Panc1 (cell line): ENCODE measurements at regions of chr2 and their contacts with region 1.

Region 1: DNA sequence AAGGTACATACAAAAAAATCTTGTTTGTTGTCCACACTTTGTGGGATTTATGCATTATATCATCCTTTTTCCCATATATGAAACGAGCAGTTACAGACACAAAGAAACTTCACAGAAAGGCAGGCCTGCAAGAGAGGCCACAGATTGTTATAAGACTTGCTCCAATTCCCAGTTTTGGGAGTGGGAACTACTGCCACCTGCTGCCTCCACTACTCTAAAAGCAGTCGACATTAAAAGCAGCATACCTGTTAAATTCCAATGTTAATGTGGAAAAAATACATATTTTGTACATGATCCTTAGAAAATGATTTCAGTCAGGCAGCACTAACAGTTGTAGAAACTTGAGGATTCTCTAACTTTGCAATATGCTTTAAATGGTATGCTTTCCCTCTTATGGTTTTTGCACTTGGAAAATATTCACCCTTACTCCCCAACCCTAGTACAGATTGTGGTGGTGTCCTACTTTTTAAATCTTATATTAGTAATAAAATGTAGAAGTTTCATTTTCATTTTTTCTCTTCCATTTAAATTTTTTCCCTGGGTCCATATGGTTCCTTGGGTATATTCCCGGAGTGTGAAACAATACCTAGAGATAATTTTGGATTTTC is 37.9 kb downstream of the SLC38A11 start:
- DNase-seq: no peak
- ATAC-seq: peak; percentile 70; the same call in 1 of the 2 replicates
- H3K4me3 ChIP-seq: no peak overlapping the region
- H3K27ac ChIP-seq: no peak overlapping the region
- H3K4me1 ChIP-seq: no peaks in the 10 kb centered on the region
- H3K27me3 ChIP-seq: no peaks in the 10 kb centered on the region
- CTCF ChIP-seq: peak; percentile 61

Region 2: GRCh38 chr2:164737612-164738081 is 179.8 kb before region 1 on chr2:
- CTCF ChIA-PET with region 1: interaction called, 3 read pairs
- POLR2A ChIA-PET with region 1: no interaction called
- in situ Hi-C with region 1: no loop called
- intact Hi-C with region 1: loop called (anchors 1 kb)
- DNase-seq: no peak
- ATAC-seq: peak; percentile 80
- H3K4me3 ChIP-seq: no peak overlapping the region
- H3K27ac ChIP-seq: no peak overlapping the region
- H3K4me1 ChIP-seq: no peaks in the 10 kb centered on the region
- H3K27me3 ChIP-seq: no peaks in the 10 kb centered on the region; the same call in 1 of the 2 replicates
- CTCF ChIP-seq: peak; percentile 82

Region 3: GRCh38 chr2:164896634-164897355 is 20.6 kb before region 1 on chr2:
- CTCF ChIA-PET with region 1: no interaction called
- POLR2A ChIA-PET with region 1: no interaction called
- in situ Hi-C with region 1: no loop called
- intact Hi-C with region 1: no loop called
- DNase-seq: no peak
- ATAC-seq: no peak
- H3K4me3 ChIP-seq: no peak overlapping the region
- H3K27ac ChIP-seq: no peak overlapping the region
- H3K4me1 ChIP-seq: no peaks in the 10 kb centered on the region
- H3K27me3 ChIP-seq: no peaks in the 10 kb centered on the region
- CTCF ChIP-seq: no peak